ENCODE measurements at regions of chr1 and their contacts with region 1.

Region 1: DNA sequence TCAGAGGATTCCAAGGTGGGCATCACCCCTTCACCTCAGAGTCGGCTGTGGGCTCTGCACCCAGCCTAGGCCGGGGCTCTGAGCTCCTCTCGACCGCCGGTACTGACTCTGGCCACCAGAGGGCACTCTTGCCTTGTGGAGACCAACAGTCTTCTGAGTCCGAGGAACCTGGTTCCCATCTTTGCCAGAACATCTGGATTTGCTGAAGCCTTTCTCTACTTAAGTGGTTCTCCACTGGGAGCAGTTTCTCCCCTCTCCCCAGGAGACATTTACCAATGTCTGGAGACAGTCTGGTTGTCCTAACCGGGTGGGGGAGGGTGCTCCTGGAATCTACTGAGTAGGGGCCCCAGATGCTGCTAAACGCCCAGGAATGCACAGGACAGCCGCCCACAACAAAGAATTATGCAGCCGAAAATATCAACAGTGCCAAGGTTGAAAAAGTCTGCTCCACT is 9.4 kb downstream of the ETV3L start:
- DNase-seq: peak; percentile 51 to 91 (median 81)
- ATAC-seq: peak; percentile 63 to 89 (median 82)
- H3K4me3 ChIP-seq: no peak overlapping the region
- H3K4me3 Mint-ChIP-seq: no peak overlapping the region
- H3K27ac ChIP-seq: no peak overlapping the region
- H3K27ac Mint-ChIP-seq: no peak overlapping the region
- H3K4me1 ChIP-seq: peaks cover 0 to 6% of the 10 kb centered on the region in 2 experiments
- H3K4me1 Mint-ChIP-seq: peaks cover 0 to 5% (median 4%) of the 10 kb centered on the region in 3 donors
- H3K27me3 ChIP-seq: peaks cover 0 to 21% of the 10 kb centered on the region in 2 experiments
- H3K27me3 Mint-ChIP-seq: peaks cover 0 to 2% of the 10 kb centered on the region in 2 donors

Region 2: GRCh38 chr1:157073944-157074767 is 16.1 kb before region 1 on chr1:
- CTCF ChIA-PET with region 1: interaction called, 3 to 11 read pairs
- POLR2A ChIA-PET with region 1: no interaction called
- DNase-seq: peak in 19 of 35 experiments; percentile 8 to 39 (median 17)
- ATAC-seq: peak in 1 of 4 experiments; percentile 17
- H3K4me3 ChIP-seq: no peak overlapping the region
- H3K4me3 Mint-ChIP-seq: peak overlapping the region in 1 of 3 donors; percentile 15
- H3K27ac ChIP-seq: no peak overlapping the region
- H3K27ac Mint-ChIP-seq: no peak overlapping the region
- H3K4me1 ChIP-seq: peaks cover 0 to 4% of the 10 kb centered on the region in 2 experiments
- H3K4me1 Mint-ChIP-seq: peaks cover 1 to 10% (median 5%) of the 10 kb centered on the region in 3 donors
- H3K27me3 ChIP-seq: peaks cover 0 to 29% of the 10 kb centered on the region in 2 experiments
- H3K27me3 Mint-ChIP-seq: peaks cover 31 to 40% of the 10 kb centered on the region in 2 donors

Region 3: DNA sequence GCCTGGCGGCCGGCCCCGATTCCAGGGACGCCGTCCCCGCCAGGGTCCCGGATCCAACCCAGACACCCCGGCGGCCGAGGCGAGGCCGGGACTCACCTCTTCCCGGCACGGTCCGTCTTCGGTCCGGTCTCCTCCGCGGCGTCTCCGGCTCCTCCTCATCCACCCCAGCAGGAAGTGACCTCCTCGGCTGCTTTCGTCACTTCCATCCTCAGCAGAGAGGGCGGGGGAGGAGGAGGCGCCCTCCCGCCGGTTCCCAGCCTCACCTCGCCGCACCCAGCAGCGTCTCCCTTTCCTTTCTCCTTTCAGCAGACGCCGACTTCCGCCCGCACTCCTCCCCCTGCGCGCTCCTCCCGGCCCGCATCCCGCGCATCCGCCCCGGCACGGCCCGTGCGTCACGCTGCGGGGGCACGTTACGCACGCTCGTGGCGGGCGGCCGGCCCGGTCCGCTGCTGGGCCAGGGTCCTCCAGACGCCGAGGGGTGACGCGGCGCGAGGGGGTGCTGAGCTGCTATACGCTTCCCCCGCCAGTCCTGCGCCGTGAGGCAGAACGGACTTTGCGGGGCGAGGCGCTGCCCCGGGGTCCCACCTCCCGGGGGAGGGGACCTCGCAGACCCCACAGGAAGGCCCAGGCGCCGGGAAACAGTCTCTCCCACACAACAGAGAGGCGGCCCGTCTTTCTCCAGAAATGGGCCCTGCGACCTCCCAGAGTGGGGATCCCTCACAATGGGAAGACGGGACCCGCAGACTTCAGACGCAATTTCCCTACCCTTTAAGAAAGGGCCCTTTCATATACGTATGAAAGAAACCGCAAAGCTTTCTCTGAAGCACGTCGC is 48.2 kb after region 1 on chr1 and contains the start of gene ETV3:
- CTCF ChIA-PET with region 1: interaction called in 1 of 2 experiments, 19 read pairs
- POLR2A ChIA-PET with region 1: no interaction called
- DNase-seq: peak; percentile 70 to 93 (median 83)
- ATAC-seq: peak; percentile 80 to 85 (median 82)
- H3K4me3 ChIP-seq: peak within 1 kb of the TSS; percentile 91 to 92
- H3K4me3 Mint-ChIP-seq: peak within 1 kb of the TSS; percentile 89 to 96 (median 95)
- H3K27ac ChIP-seq: peak within 1 kb of the TSS; percentile 98
- H3K27ac Mint-ChIP-seq: peak within 1 kb of the TSS; percentile 90 to 94
- H3K4me1 ChIP-seq: peaks cover 36 to 44% of the 10 kb centered on the region in 2 experiments
- H3K4me1 Mint-ChIP-seq: peaks cover 56 to 59% (median 56%) of the 10 kb centered on the region in 3 donors
- H3K27me3 ChIP-seq: no peaks in the 10 kb centered on the region
- H3K27me3 Mint-ChIP-seq: no peaks in the 10 kb centered on the region
- total RNA-seq, gene ETV3: 30.6 to 86.3 (median 33.4) TPM

Measured in T-cell (primary cell).